WTC11 (cell line): ENCODE measurements at regions of chr2 and their contacts with region 1.

Region 1: GRCh38 chr2:58448065-58448507 is 207.0 kb upstream of the FANCL start:
- DNase-seq: peak; percentile 83
- ATAC-seq: peak; percentile 97
- H3K4me3 Mint-ChIP-seq: no peak overlapping the region
- H3K27ac Mint-ChIP-seq: peak overlapping the region; percentile 67
- H3K4me1 Mint-ChIP-seq: peaks cover 41% of the 10 kb centered on the region
- H3K27me3 Mint-ChIP-seq: no peaks in the 10 kb centered on the region
- CTCF ChIP-seq: peak; percentile 42; the same call in 1 of the 2 replicates

Region 2: DNA sequence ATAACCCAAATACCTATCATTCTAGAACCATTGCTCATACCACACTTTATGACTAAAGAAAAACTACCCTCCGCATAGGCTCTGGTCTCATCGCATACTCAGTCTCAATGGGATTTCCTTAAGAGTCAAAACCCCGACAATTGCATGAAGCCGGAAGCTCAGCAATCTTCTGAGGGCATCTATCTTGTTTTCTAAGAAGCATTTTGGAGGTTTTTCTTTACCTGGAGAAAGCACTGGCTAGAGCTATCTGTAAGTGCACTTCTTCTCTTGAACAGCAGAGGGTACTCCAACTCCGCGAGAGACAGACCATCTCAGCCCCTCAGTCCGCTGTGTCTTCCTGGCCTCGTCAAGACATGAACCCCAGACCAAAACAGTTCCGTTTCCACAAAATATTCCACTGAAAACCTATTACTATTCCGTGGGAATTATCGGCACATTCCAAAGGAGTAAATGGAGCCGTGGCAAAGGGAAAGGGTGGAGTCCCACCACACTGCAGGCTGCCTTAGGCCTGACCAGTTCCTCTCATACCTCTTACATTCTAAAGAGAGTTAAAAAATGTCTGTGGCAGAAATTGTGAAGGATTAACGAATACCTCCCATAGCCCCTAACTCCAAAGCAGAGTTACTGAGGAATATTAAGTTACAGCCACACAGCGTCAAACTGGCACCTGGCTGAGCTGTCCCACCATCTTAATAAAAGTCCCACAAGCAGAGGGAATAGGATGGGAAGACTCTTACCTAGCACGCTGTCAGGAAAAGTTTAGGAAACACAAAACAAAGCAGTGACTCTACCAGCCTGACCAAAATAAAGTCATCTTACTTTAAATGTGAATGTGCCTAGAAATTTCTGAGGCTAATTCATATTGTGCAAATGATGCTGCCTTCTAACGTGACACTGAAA is 727.1 kb before region 1 on chr2:
- CTCF ChIA-PET with region 1: interaction called, 13 read pairs
- POLR2A ChIA-PET with region 1: no interaction called
- DNase-seq: peak; percentile 62
- ATAC-seq: peak; percentile 100
- H3K4me3 Mint-ChIP-seq: peak overlapping the region; percentile 49
- H3K27ac Mint-ChIP-seq: no peak overlapping the region
- H3K4me1 Mint-ChIP-seq: peaks cover 18% of the 10 kb centered on the region
- H3K27me3 Mint-ChIP-seq: no peaks in the 10 kb centered on the region
- CTCF ChIP-seq: peak; percentile 83

Region 3: GRCh38 chr2:57759822-57760300 is 688.2 kb before region 1 on chr2:
- CTCF ChIA-PET with region 1: interaction called, 16 read pairs
- POLR2A ChIA-PET with region 1: no interaction called
- DNase-seq: peak; percentile 94
- ATAC-seq: peak; percentile 94
- H3K4me3 Mint-ChIP-seq: peak overlapping the region; percentile 53
- H3K27ac Mint-ChIP-seq: no peak overlapping the region
- H3K4me1 Mint-ChIP-seq: peaks cover 39% of the 10 kb centered on the region
- H3K27me3 Mint-ChIP-seq: peaks cover 2% of the 10 kb centered on the region; the same call in 1 of the 2 replicates
- CTCF ChIP-seq: peak; percentile 92

Region 4: GRCh38 chr2:57906152-57906732 is 541.8 kb before region 1 on chr2:
- CTCF ChIA-PET with region 1: interaction called, 16 read pairs
- POLR2A ChIA-PET with region 1: no interaction called
- DNase-seq: no peak
- ATAC-seq: peak; percentile 96
- H3K4me3 Mint-ChIP-seq: no peak overlapping the region
- H3K27ac Mint-ChIP-seq: no peak overlapping the region
- H3K4me1 Mint-ChIP-seq: peaks cover 16% of the 10 kb centered on the region
- H3K27me3 Mint-ChIP-seq: no peaks in the 10 kb centered on the region
- CTCF ChIP-seq: peak; percentile 41; the same call in 1 of the 2 replicates

Region 5: GRCh38 chr2:58291726-58292438 is 156.2 kb before region 1 on chr2:
- CTCF ChIA-PET with region 1: no interaction called
- POLR2A ChIA-PET with region 1: no interaction called
- DNase-seq: no peak
- ATAC-seq: no peak
- H3K4me3 Mint-ChIP-seq: no peak overlapping the region
- H3K27ac Mint-ChIP-seq: no peak overlapping the region
- H3K4me1 Mint-ChIP-seq: peaks cover 3% of the 10 kb centered on the region
- H3K27me3 Mint-ChIP-seq: no peaks in the 10 kb centered on the region
- CTCF ChIP-seq: no peak

Region 6: GRCh38 chr2:58357521-58357920 is 90.6 kb before region 1 on chr2:
- CTCF ChIA-PET with region 1: interaction called, 14 read pairs
- POLR2A ChIA-PET with region 1: no interaction called
- DNase-seq: no peak
- ATAC-seq: peak; percentile 90
- H3K4me3 Mint-ChIP-seq: no peak overlapping the region
- H3K27ac Mint-ChIP-seq: peak overlapping the region; percentile 54
- H3K4me1 Mint-ChIP-seq: peaks cover 28% of the 10 kb centered on the region
- H3K27me3 Mint-ChIP-seq: no peaks in the 10 kb centered on the region
- CTCF ChIP-seq: no peak

Region 7: GRCh38 chr2:58501371-58502160 is 53.5 kb after region 1 on chr2:
- CTCF ChIA-PET with region 1: no interaction called
- POLR2A ChIA-PET with region 1: no interaction called
- DNase-seq: no peak
- ATAC-seq: no peak
- H3K4me3 Mint-ChIP-seq: no peak overlapping the region
- H3K27ac Mint-ChIP-seq: no peak overlapping the region
- H3K4me1 Mint-ChIP-seq: peaks cover 62% of the 10 kb centered on the region
- H3K27me3 Mint-ChIP-seq: no peaks in the 10 kb centered on the region; the same call in 1 of the 2 replicates
- CTCF ChIP-seq: no peak

Region 8: DNA sequence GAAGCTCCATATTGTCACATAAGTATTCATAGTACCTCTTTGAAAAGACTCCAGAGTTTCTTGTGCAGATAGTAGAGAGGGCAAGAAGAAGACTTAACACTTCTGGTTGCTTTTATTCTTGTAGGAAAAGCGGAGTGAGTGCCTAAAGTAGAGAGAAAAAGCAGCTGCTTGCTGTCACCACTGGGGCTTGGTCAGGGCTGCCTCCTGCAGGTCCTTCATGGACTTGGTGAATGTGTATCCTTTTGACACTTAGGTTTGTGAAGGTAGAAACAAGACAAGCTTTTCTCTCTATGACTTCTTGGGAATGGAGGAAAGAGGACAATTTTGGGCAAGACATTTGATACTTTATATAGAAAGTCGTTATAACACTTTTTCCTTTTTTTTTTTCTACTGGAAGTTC is 105.9 kb after region 1 on chr2:
- CTCF ChIA-PET with region 1: interaction called, 58 read pairs
- POLR2A ChIA-PET with region 1: interaction called, 4 read pairs
- DNase-seq: peak; percentile 47
- ATAC-seq: peak; percentile 85
- H3K4me3 Mint-ChIP-seq: no peak overlapping the region
- H3K27ac Mint-ChIP-seq: peak overlapping the region; percentile 78
- H3K4me1 Mint-ChIP-seq: peaks cover 38% of the 10 kb centered on the region
- H3K27me3 Mint-ChIP-seq: no peaks in the 10 kb centered on the region
- CTCF ChIP-seq: no peak